GM13977 (cell line): ENCODE measurements at regions of chr15 and their contacts with region 1.

Region 1: DNA sequence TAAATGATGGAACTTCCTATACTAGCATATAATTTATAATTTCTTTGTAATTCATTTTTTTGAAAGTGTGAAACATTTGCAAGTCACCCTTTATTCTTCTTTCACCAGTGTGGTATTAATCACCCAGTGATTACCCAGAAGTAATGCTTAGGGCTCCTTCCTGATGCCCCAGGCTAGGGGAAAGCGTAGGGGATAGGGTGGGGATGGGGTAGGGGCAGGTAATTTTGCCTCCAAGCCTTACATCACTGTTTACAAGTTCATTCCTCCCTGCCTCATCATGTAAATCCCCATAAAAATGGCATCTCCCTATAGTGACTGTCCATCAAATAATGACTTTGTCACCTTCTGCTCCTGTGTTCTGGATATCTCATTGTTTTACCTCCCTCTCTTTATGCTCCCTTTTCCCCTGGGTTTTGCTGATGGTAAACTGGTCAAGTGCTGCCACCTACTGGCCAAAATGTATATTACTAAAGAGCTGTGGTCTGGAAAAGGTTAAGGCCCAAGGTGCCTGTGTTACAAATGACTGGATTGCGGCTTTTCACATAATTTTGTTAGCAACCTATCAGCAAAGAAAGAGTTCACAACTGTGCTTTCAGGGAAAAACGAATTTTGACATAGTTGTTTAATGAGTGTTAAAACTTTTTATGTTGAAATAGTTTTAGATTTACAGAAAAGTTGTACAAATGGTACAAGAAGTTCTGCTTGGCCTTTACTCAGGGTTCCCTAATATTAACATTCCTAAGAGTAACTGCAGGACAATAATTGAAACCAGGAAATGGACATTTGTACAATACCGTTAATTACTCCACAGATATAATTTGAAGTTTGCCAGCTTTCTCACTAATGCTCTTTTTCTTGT is 54.7 kb downstream of the ONECUT1 start:
- DNase-seq: peak; percentile 65
- CTCF ChIP-seq: peak; percentile 75

Region 2: DNA sequence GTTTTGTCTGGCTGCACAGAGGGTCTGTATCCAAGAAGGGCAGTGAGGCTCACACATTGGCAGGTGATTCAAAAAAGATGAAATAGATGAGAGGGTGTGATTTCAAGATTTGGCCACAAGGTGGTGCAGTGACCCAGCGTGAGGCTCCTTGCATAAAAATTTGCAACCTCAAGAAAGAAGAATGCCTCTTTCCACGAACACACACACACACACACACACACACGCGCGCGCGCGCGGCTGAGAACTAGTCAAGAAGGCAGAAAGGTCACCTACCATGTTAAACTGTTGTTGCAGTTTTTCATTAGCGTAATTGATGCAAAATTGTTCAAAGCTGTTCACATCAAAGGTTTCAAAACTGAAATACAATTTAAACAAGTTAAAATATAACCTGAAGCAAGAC is 479.1 kb before region 1 on chr15:
- in situ Hi-C with region 1: loop called (anchors 10 kb)
- DNase-seq: peak; percentile 74
- CTCF ChIP-seq: peak; percentile 73

Region 3: DNA sequence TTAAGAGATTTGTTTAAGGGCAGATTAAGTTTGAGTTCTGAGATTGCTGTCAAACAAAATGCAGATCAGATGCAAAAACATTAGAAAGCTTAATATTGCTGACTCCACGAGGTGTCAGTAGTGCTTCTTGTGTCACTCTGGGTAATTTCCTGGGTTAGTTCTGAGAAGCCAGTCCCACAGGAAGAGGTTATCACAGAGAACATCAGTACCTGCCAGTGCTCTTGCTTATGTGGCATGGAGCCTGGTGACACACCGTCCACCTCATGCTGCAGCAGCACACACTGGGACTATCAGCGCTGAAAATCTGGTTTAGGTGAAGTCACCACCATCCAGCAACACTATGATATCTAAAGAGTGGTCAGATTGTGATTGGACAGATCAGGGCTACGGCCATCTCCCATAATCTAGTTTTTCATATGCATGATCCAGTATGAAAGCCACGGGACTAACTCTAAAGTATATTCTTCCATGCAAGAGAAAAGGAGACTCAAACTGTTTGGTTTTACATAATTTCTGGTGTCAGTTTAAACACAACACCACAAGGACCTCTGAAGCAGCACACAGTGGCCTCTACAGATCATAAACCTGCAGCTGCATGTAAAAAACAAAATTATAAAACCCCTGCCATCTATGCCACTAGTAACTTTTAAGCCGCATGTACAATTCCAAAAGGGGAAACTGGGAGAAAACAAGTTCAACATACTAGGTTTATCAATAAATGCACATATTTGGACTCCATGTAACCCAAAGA is 403.8 kb before region 1 on chr15:
- in situ Hi-C with region 1: loop called (anchors 10 kb)
- DNase-seq: peak; percentile 66
- CTCF ChIP-seq: peak; percentile 68

Region 4: GRCh38 chr15:52642386-52643361 is 92.8 kb before region 1 on chr15:
- in situ Hi-C with region 1: no loop called
- DNase-seq: no peak
- CTCF ChIP-seq: no peak

Region 5: GRCh38 chr15:52667597-52667996 is 67.9 kb before region 1 on chr15:
- in situ Hi-C with region 1: no loop called
- DNase-seq: no peak
- CTCF ChIP-seq: no peak

Region 6: DNA sequence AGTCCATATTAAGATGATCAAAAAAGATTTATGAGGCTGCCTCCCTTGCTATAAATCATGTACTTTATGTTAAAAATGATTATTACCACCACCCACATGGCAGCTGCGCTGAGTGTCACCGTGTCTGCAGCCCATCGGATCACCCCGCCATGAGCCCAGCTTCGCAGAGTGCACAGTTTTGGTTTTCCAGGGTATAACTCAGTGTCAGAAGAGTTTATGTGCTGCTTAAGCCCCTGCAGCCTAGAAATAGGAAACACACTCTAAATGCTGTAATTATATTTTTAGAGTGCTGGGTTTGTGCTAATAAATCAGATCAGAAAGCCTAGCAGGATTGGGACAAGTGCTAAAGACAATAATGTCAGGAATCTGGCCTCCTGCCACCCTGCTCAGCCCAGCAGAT is 109.4 kb after region 1 on chr15:
- in situ Hi-C with region 1: no loop called
- DNase-seq: no peak
- CTCF ChIP-seq: no peak